ENCODE measurements at regions of chr7 and their contacts with region 1.

Region 1: DNA sequence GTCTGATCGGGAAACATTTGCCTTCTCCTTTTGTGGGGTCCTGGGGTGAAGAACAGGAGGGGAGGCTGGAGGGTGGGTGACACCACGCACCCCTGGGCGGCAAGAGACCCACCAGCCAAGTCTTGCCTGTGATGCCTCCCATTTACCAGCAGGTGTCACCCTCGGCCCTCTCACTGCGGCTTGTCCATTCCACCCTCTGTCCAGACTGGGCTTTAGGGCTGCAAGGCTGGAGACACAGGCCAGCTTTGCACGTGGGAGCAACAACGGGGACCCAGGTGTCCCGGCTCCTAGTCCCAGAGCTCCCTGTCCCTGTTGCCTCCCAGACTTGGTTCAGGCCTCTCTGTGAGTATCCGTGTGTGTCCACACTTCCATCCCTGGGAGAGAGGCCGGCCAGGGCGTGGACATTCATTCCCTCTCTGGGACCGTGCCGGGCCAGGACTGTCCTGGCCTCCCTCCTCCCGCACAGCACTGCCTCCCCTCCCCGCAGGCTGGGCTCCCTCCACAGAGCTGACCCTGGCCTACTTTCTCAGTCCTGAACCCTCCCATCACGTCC is 36.2 kb upstream of the GTF2IRD1 start:
- DNase-seq: peak; percentile 92
- CTCF ChIP-seq: peak; percentile 93

Region 2: DNA sequence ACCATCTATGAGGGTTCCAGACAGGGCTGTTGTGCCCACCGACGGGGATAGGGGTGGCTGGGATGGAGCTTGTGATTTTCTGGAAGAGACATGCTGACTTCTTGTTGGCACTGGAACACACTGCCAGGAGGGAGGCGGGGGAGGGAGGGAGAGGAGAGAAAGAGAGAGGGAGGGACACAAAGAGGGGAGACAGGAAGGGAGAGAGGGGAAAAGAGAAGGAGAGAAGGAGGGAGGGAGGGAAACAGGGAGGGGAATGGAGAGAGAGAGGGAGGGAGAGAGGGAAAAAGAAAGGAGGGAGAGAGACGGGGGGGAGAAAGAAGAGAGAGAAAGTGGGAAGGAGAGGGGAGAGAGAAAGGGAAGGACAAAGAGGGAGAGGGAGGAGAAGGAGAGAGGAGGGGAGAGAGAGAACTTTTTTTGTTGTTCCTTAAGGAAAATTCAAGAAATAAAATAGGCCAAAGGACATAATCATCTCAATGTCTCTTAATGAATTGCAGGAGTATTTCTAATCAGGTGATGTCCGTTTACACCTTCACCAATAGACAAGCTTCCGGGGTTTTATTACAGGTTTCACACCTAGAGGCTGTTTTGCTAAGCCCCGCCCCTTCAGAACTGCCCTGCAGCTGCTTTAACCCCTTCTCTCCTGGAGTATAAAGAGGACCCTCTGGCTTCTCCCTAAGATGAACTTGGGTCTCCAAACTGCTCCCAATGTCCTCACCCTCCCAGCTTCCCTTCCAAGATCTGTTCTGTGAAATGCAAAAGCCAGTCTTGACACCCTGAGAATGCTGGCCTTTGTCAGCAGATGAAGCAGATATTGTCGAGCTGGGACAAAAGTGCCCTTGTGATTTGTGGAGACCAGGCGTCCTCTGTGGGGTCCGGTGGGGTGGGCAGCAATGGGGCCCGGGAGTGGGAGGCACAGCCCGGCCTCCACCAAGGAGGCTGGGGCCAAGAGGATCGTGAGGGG is 45.8 kb before region 1 on chr7:
- CTCF ChIA-PET with region 1: no interaction called
- POLR2A ChIA-PET with region 1: no interaction called
- DNase-seq: no peak
- CTCF ChIP-seq: no peak

Region 3: DNA sequence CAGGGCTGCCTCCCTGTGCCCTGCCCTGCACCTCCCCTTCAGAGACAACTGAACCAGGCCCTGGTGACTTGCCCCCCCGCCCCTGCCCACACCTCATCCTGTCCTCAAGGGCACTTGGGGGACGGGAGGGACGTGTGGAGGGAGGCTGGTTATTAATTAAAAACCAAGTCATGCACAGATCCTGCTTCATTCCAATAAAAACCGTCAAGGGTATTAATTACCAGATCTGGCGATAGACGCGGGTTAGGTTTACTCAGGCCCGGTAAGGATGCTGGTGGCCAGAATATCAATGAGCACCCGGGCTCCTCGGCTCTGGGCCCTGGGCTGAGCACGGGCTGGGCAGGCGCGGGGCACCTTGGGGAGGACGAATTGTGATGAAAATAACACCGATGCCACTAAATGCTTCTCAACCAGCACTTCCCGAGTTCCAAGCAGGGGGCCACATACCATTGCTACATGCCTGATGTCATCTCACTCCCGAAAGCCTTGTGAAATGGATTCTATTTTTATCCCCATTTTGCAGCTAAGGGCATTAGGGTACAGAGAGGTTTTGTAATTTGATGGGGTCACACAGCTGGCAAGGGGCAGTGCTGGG is 11.8 kb after region 1 on chr7:
- CTCF ChIA-PET with region 1: interaction called, 20 read pairs
- POLR2A ChIA-PET with region 1: no interaction called
- DNase-seq: no peak
- CTCF ChIP-seq: no peak

Measured in GM10248 (cell line).